H1 (cell line): ENCODE measurements at regions of chr17 and their contacts with region 1.

Region 1: DNA sequence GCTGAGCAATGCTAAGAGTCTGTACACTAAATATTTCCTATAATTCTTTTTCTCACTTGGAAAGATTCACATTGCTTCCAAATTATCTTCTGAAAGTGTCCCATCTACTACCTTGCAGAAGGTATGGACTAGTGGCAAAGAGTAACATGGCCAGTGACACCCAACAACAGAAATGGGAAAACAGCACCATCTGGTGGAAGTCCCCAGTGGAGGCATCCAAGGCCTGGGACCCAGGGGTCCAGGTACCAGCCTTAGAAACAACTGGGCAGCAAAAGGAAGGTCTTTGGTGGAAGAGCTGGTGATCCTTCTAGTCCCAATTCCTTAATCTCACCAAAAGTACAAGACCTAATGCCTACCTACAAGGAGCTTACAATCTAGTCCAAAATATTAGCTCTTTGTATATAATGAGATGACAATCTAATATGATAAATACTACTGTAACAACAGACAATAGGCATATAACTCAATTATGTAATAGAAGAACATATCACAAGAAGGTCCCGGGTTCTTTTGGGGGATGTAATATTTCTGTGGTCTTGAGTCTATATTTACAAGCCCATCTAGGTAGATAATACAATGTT is 55.3 kb downstream of the SKAP1 start:
- DNase-seq: peak; percentile 9 to 74
- H3K4me3 ChIP-seq: no peak overlapping the region
- H3K27ac ChIP-seq: no peak overlapping the region
- H3K4me1 ChIP-seq: no peaks in the 10 kb centered on the region
- H3K27me3 ChIP-seq: no peaks in the 10 kb centered on the region; a peak in 1 of 7 replicates
- CTCF ChIP-seq: peak; percentile 90 to 97 (median 91)
- EP300 ChIP-seq: no peak
- POLR2A ChIP-seq: no peak
- RAD21 ChIP-seq: peak; percentile 92 to 97

Region 2: GRCh38 chr17:48215583-48216139 is 159.1 kb before region 1 on chr17:
- CTCF ChIA-PET with region 1: interaction called, 33 read pairs
- POLR2A ChIA-PET with region 1: no interaction called
- DNase-seq: peak in 1 of 2 experiments; percentile 47
- H3K4me3 ChIP-seq: no peak overlapping the region
- H3K27ac ChIP-seq: no peak overlapping the region
- H3K4me1 ChIP-seq: no peaks in the 10 kb centered on the region; a peak in 1 of 7 replicates
- H3K27me3 ChIP-seq: peaks cover 0 to 3% (median 1%) of the 10 kb centered on the region in 4 experiments; a peak in 3 of 7 replicates
- CTCF ChIP-seq: peak; percentile 63 to 78 (median 77)
- EP300 ChIP-seq: no peak
- POLR2A ChIP-seq: no peak
- RAD21 ChIP-seq: peak; percentile 93

Region 3: GRCh38 chr17:48335858-48336500 is 38.8 kb before region 1 on chr17:
- CTCF ChIA-PET with region 1: interaction called, 19 read pairs
- POLR2A ChIA-PET with region 1: no interaction called
- DNase-seq: no peak
- H3K4me3 ChIP-seq: no peak overlapping the region
- H3K27ac ChIP-seq: no peak overlapping the region
- H3K4me1 ChIP-seq: no peaks in the 10 kb centered on the region
- H3K27me3 ChIP-seq: peaks cover 0 to 2% (median 0%) of the 10 kb centered on the region in 4 experiments; a peak in 2 of 7 replicates
- CTCF ChIP-seq: peak in 2 of 3 experiments; percentile 37 to 50; a peak in 2 of 4 replicates
- EP300 ChIP-seq: no peak
- POLR2A ChIP-seq: no peak
- RAD21 ChIP-seq: peak; percentile 49 to 67

Region 4: GRCh38 chr17:48363161-48363560 is 11.6 kb before region 1 on chr17:
- CTCF ChIA-PET with region 1: interaction called, 13 read pairs
- POLR2A ChIA-PET with region 1: no interaction called
- DNase-seq: no peak
- H3K4me3 ChIP-seq: no peak overlapping the region
- H3K27ac ChIP-seq: no peak overlapping the region
- H3K4me1 ChIP-seq: no peaks in the 10 kb centered on the region
- H3K27me3 ChIP-seq: peaks cover 0 to 1% (median 0%) of the 10 kb centered on the region in 4 experiments; a peak in 3 of 7 replicates
- CTCF ChIP-seq: no peak
- EP300 ChIP-seq: no peak
- POLR2A ChIP-seq: no peak
- RAD21 ChIP-seq: no peak

Region 5: GRCh38 chr17:48593840-48594537 is 219.2 kb after region 1 on chr17:
- CTCF ChIA-PET with region 1: interaction called, 12 read pairs
- POLR2A ChIA-PET with region 1: no interaction called
- DNase-seq: peak; percentile 51 to 95
- H3K4me3 ChIP-seq: no peak overlapping the region
- H3K27ac ChIP-seq: no peak overlapping the region
- H3K4me1 ChIP-seq: peaks cover 0 to 12% (median 4%) of the 10 kb centered on the region in 4 experiments; a peak in 5 of 7 replicates
- H3K27me3 ChIP-seq: peaks cover 96 to 100% (median 99%) of the 10 kb centered on the region in 4 experiments
- CTCF ChIP-seq: peak; percentile 86 to 89 (median 89)
- EP300 ChIP-seq: no peak
- POLR2A ChIP-seq: no peak
- RAD21 ChIP-seq: peak; percentile 90 to 91